Activated T-helper 1 cell treated with anti-CD3 and anti-CD28 coated beads, Interleukin-12 subunit alpha, Interleukin-12 subunit beta, Interleukin-2, Interleukin-4 antibody, amounts not matched to agents 30 ng/mL and 10 ng/mL and 1 ng/mL, durations not matched to agents 14 hours and 24 hours and 36 hours (primary cell): ENCODE measurements at regions of chr5 and their contacts with region 1.

Region 1: DNA sequence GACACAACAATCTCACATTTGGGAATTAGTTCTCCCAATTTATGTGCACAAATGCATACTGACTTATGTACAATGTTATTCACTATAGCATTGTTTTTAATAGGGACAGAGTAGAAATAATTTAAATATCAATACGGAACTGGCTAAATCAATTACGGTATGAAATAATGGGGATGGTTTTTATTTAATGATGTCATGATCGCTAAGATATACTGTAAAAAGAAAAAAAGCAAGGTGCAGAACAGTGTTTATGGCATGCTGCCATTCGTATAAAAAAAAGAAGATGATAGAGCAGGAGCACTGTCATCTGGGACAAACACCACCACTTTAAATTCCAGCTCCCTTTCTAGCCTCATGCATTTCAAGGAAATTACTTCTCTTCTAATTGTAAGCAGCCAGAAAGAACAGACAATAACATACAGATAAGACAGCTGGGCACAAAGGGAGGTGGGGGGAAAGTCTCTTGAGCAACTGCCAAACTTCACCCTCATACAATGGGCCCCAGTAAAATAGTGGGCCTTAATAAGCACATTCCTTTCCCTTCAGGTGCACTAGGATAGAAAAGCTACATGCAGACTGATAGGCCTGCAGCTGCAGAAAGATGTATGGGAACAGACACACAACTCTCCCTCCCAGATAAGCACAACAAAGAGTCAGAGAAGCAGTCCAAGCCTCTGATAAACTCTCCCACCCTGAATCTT is 8.4 kb downstream of the SREK1IP1 start:
- DNase-seq: no peak
- H3K4me3 Mint-ChIP-seq: no peak overlapping the region
- H3K27ac Mint-ChIP-seq: no peak overlapping the region
- H3K4me1 Mint-ChIP-seq: peaks cover 8% of the 10 kb centered on the region
- H3K27me3 Mint-ChIP-seq: no peaks in the 10 kb centered on the region

Region 2: DNA sequence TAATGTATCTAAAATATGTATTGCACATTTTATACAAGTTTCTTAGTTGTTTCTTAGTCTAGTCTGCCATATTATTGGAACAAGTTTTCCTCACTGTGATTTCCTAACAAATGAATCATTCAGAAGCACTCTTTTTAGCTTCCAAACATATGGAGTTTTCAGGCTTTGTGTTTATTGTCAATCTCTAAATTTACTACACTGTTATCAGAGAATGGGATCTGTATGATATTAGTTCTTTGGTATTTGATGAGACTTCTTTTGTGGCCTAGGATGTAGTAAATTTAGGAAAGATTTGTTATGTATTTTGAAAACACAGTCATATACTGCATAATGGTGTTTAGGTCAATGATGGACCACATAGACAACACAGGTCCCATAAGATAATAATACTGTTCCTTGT is 17.3 kb before region 1 on chr5:
- intact Hi-C with region 1: loop called (anchors 2 kb)
- DNase-seq: no peak
- H3K4me3 Mint-ChIP-seq: no peak overlapping the region
- H3K27ac Mint-ChIP-seq: no peak overlapping the region
- H3K4me1 Mint-ChIP-seq: peaks cover 7% of the 10 kb centered on the region
- H3K27me3 Mint-ChIP-seq: no peaks in the 10 kb centered on the region